Colonic mucosa (tissue), 4 donors: ENCODE measurements at regions of chr5 and their contacts with region 1.

Region 1: DNA sequence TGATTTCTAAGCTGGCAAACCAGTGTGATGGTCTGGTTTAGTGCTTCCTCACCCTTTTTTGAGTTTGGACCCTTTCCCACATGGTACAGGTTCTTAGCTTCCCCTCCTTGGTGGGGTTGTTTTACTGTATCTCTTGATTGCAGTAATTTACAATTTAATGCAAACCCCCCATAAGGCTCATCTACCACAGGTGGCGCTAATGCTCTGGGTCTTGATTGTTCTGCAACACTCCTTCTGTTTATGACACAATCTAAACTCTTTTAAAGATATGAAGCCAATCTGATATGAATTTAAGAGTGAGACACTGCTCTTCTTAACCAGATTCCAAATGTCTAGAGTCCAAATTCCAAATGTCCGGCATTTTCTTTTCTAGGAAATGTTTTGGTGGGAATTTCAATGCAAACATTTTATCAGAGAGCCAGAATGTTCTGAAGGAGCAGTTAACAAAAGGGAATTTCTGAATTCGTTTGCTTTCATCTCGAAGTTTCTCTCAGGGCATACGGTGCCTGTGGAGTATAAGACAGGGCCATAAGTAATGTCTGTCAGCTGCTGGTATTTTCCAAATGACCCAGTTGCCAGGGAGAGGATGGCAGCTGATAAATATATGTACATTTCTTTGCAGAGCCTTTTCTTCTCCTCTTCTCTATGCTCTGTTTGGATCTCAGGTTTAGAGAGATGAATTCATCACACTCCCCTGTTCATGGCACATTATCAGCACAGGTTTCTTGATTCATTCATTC is 246.8 kb downstream of the ARHGAP26 start:
- DNase-seq: peak; percentile 63
- H3K4me3 ChIP-seq: no peak overlapping the region
- H3K27ac ChIP-seq: no peak overlapping the region
- H3K4me1 ChIP-seq: no peaks in the 10 kb centered on the region
- H3K27me3 ChIP-seq: no peaks in the 10 kb centered on the region
- CTCF ChIP-seq: peak; percentile 38

Region 2: GRCh38 chr5:143302341-143302740 is 285.4 kb after region 1 on chr5:
- intact Hi-C with region 1: no loop called
- DNase-seq: no peak
- H3K4me3 ChIP-seq: no peak overlapping the region
- H3K27ac ChIP-seq: no peak overlapping the region
- H3K4me1 ChIP-seq: no peaks in the 10 kb centered on the region
- H3K27me3 ChIP-seq: no peaks in the 10 kb centered on the region
- CTCF ChIP-seq: no peak

Region 3: GRCh38 chr5:143403593-143404415 is 386.9 kb after region 1 on chr5 and contains the start of gene NR3C1:
- intact Hi-C with region 1: loop called (anchors 10 kb)
- DNase-seq: peak; percentile 81
- H3K4me3 ChIP-seq: peak within 1 kb of the TSS; percentile 58
- H3K27ac ChIP-seq: peak within 1 kb of the TSS; percentile 98
- H3K4me1 ChIP-seq: no peaks in the 10 kb centered on the region
- H3K27me3 ChIP-seq: no peaks in the 10 kb centered on the region
- CTCF ChIP-seq: peak; percentile 34
- total RNA-seq, gene NR3C1: 13.0 to 23.5 TPM